SK-N-SH (cell line): ENCODE measurements at regions of chr10 and their contacts with region 1.

Region 1: DNA sequence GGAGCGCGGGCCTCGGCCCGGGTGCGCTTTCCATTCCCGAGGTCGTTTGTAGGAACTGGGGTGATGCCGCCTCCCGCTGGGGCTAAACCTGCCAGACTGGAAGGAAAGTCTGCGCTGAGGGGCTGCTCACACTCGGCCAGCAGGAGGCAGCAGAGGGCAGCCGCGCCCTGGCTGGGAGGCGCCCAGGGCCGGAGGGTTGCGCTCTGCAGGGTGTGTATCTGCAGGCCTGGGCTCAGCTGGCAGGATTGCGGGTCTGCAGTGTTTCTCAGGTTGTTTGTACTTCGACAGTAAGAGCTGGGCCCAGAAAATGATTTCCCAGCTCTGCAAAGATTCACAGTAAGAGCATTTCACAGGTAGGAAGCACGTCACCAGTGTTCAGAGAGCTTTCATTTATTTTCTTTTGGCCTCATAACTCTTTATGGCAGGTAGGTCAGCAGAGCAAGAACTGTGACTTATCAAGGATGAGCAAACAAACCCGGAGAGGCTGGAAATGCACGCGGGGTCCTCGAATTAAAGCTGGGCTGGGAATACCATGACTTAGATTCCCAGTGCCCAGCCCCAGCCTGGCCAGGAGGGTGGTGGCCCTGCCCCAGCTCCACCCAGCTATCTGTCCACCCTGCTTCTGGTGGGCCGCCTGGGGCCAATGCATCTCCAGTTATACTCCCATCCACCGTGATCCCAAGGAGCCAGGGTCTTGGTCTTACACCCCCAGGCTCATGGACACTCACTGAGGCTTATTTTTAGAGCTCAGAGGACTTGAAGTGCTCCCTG is 15.2 kb upstream of the PPP2R2D start:
- DNase-seq: peak; percentile 93
- H3K4me3 ChIP-seq: no peak overlapping the region; a peak in 1 of 4 replicates
- H3K27ac ChIP-seq: no peak overlapping the region
- H3K4me1 ChIP-seq: no peaks in the 10 kb centered on the region; a peak in 1 of 4 replicates
- H3K27me3 ChIP-seq: no peaks in the 10 kb centered on the region
- CTCF ChIP-seq: peak; percentile 81
- EP300 ChIP-seq: no peak
- RAD21 ChIP-seq: peak; percentile 89

Region 2: GRCh38 chr10:131556897-131557495 is 328.6 kb before region 1 on chr10:
- CTCF ChIA-PET with region 1: no interaction called
- POLR2A ChIA-PET with region 1: no interaction called
- DNase-seq: no peak
- H3K4me3 ChIP-seq: no peak overlapping the region
- H3K27ac ChIP-seq: no peak overlapping the region
- H3K4me1 ChIP-seq: no peaks in the 10 kb centered on the region
- H3K27me3 ChIP-seq: no peaks in the 10 kb centered on the region
- CTCF ChIP-seq: no peak
- EP300 ChIP-seq: no peak
- RAD21 ChIP-seq: no peak

Region 3: GRCh38 chr10:131900350-131901146 is 15.0 kb after region 1 on chr10 and contains the start of gene PPP2R2D:
- CTCF ChIA-PET with region 1: interaction called, 23 read pairs
- POLR2A ChIA-PET with region 1: no interaction called
- DNase-seq: peak; percentile 99
- H3K4me3 ChIP-seq: peak within 1 kb of the TSS; percentile 83 to 93
- H3K27ac ChIP-seq: peak within 1 kb of the TSS; percentile 54 to 88
- H3K4me1 ChIP-seq: peaks cover 18 to 20% of the 10 kb centered on the region in 2 experiments; a peak in 3 of 4 replicates
- H3K27me3 ChIP-seq: peaks cover 18% of the 10 kb centered on the region; the same call in 1 of the 2 replicates
- CTCF ChIP-seq: no peak
- EP300 ChIP-seq: no peak
- RAD21 ChIP-seq: no peak
- polyA plus RNA-seq, gene PPP2R2D: 24.3 and 25.1 TPM in 2 replicates